ENCODE measurements at regions of chr2 and their contacts with region 1.

Region 1: DNA sequence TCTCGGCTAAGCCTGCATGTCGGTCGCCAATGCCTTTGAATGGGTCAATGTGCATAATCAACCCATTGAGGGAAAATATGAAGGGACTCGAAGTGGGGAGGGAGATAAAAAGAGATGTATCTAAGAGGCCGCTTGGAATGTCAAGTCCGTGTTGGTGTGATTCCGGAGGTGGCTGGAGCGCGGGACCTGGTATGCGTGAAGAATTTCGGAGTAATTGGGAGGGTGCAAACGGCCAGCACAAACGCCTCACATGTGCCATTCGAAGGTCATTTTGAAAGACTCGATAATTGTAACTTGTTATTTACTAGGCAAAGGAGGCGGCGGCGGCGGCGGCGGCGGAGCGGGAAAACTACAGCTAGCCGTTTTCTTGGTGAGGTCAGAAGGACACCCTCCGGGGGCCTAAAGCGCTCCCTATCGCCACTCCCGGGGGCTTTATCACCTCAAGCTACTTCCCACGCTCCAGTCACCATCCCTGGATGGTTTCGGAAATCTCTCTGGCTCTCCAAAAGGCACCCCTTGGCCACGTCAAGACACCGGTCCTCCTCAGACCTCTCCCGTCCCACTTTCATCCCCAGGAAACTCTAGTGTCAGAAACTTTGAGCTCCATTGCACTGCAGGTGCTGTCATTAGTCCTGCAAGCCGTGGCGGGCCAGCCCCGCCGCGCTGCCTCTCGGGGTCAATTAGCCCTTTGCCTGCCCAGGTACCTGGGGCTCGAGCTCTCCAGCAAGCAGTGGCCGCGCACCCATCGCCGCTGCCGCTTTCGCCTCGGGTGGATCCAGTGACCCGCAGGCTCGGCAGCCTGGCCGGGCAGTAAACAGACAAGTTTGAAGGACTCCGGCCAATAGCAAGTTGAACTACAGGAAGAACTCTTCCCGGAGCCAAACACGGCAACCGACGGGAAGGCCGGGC is 1.5 kb downstream of the ERBB4 start:
- DNase-seq: peak; percentile 69
- ATAC-seq: peak; percentile 9

Region 2: GRCh38 chr2:211900005-211900404 is 637.1 kb before region 1 on chr2:
- intact Hi-C with region 1: loop called (anchors 5 kb)
- DNase-seq: no peak
- ATAC-seq: peak; percentile 67

Region 3: GRCh38 chr2:212157012-212157411 is 380.1 kb before region 1 on chr2:
- intact Hi-C with region 1: loop called (anchors 10 kb)
- DNase-seq: no peak
- ATAC-seq: no peak

Region 4: GRCh38 chr2:212346865-212347264 is 190.2 kb before region 1 on chr2:
- intact Hi-C with region 1: loop called (anchors 10 kb)
- DNase-seq: no peak
- ATAC-seq: no peak

Region 5: GRCh38 chr2:212402315-212402714 is 134.8 kb before region 1 on chr2:
- intact Hi-C with region 1: loop called (anchors 5 kb)
- DNase-seq: no peak
- ATAC-seq: no peak

Measured in Right ventricle myocardium inferior (tissue), 1 donor.